ENCODE measurements at regions of chr4 and their contacts with region 1.

Region 1: DNA sequence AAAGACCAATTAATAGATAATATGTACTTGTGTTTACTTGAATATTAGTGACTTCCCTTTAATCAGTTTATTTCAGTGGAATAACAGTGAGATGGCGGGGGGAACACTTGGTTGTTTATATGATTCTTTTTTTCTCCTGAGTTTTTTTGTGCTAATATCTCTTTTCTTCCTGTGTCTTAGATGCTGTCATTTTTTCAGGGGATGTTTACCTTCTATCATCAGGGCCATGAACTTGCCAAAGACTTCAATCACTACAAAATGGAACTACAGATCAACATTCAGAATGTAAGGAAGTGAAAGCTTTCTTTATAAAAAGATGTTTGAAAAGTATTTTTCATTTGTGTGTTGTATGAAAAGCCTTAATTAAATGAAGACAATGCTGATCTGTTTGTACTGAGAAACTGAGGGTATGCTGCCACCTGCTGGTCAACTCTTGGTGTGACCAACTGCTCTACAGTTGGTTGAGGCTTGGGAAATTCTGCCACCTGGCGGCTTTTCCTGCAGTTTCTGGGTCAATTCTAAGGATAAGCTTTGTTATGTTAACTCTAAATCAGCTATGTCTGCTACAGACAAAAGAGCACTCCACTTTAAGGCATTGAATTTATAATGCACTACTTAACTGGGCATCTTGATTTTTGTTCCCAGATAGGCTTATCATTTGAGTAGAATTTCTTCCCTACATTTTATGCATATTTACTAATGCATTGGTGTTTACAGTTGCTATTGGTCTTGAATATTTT is 134.8 kb downstream of the ARHGAP10 start:
- DNase-seq: peak; percentile 66

Region 2: GRCh38 chr4:147707865-147708672 is 158.6 kb before region 1 on chr4:
- in situ Hi-C with region 1: loop called (anchors 25 kb)
- DNase-seq: peak; percentile 68

Measured in Caki2 (cell line).